ENCODE measurements at regions of chr1 and their contacts with region 1.

Region 1: GRCh38 chr1:228212966-228213844 is 5.4 kb downstream of the OBSCN start:
- DNase-seq: peak; percentile 76
- ATAC-seq: peak; percentile 97
- H3K4me3 Mint-ChIP-seq: peak overlapping the region; percentile 89
- H3K27ac Mint-ChIP-seq: peak overlapping the region; percentile 30
- H3K4me1 Mint-ChIP-seq: peaks cover 2% of the 10 kb centered on the region
- H3K27me3 Mint-ChIP-seq: no peaks in the 10 kb centered on the region
- CTCF ChIP-seq: no peak

Region 2: DNA sequence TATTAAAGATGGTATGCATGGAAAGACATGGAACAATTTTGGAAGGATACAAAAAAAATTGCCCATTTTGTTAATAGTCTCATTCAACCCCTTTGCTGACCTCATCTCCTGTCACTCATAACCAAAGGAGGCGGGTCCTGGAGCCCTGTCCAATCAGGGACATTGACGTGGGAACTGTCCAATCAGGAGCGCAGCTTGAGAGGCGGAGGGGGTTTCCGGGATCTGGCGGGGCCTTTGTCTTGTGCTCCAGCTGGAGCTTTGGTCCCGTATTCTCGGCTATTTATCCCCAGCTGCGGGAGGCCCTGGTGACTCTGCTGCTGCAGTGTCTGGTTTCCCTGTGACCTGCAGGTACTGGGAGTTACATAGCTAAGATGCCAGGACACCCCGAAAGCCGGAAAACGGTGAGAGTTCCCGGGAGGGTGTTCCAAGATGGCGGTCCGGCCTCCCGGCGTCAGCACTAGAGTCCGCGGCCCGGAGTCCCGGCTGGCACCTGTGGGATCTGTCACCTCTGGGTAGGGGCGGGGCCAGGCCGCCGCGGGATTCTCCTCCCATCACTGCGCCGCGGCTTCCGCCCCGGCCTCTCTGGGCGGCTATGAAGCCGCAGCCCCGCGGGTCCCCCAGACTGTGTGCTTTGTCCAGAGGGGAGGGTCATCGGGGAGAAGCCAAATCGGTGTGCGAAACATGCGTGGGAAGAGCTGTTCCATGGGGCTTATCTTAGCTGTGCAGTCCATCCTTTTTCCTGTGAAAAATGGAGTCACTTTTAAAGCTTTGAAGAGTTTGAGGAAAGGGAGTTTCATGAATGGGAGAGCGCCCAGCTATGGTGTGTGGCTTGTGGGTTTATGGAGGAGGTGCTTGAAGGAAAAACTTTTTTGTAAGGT is 649.6 kb before region 1 on chr1 and contains the start of gene ZNF678:
- CTCF ChIA-PET with region 1: no interaction called
- POLR2A ChIA-PET with region 1: no interaction called
- intact Hi-C with region 1: loop called (anchors 10 kb)
- DNase-seq: peak; percentile 77
- ATAC-seq: peak; percentile 89
- H3K4me3 Mint-ChIP-seq: peak within 1 kb of the TSS; percentile 95
- H3K27ac Mint-ChIP-seq: peak within 1 kb of the TSS; percentile 94
- H3K4me1 Mint-ChIP-seq: peaks cover 48% of the 10 kb centered on the region
- H3K27me3 Mint-ChIP-seq: peaks cover 8% of the 10 kb centered on the region
- CTCF ChIP-seq: no peak
- total RNA-seq, gene ZNF678: 15.4 and 20.3 TPM in 2 replicates

Region 3: DNA sequence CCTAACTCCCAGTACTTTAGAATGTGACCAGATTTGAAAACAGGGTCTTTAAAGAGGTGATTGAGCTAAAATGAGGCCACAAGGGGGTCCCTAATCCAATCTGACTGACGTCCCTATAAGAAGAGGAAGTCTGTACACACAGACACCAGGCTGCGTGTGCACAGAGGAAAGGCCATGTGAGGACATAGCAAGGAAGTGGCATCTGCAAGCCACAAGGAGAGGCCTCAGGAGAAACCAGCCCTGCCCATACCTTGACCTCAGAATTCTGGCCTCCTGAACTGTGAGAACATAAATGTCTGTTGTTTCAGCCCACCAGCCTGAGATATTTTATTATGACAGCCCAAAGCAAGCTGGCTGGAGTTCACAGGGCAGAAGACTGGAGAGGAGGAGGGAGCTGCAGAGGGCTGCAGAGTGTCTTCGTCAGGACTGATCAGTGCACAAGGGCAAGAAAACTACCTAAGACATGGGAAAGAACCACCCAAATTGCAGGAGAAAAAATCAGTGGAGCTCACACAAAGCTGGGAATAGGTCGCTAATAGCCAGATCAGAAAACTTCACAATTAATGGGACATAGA is 251.5 kb before region 1 on chr1:
- CTCF ChIA-PET with region 1: no interaction called
- POLR2A ChIA-PET with region 1: no interaction called
- intact Hi-C with region 1: no loop called
- DNase-seq: no peak
- ATAC-seq: no peak
- H3K4me3 Mint-ChIP-seq: no peak overlapping the region
- H3K27ac Mint-ChIP-seq: no peak overlapping the region
- H3K4me1 Mint-ChIP-seq: no peaks in the 10 kb centered on the region
- H3K27me3 Mint-ChIP-seq: peaks cover 25% of the 10 kb centered on the region
- CTCF ChIP-seq: no peak

Region 4: DNA sequence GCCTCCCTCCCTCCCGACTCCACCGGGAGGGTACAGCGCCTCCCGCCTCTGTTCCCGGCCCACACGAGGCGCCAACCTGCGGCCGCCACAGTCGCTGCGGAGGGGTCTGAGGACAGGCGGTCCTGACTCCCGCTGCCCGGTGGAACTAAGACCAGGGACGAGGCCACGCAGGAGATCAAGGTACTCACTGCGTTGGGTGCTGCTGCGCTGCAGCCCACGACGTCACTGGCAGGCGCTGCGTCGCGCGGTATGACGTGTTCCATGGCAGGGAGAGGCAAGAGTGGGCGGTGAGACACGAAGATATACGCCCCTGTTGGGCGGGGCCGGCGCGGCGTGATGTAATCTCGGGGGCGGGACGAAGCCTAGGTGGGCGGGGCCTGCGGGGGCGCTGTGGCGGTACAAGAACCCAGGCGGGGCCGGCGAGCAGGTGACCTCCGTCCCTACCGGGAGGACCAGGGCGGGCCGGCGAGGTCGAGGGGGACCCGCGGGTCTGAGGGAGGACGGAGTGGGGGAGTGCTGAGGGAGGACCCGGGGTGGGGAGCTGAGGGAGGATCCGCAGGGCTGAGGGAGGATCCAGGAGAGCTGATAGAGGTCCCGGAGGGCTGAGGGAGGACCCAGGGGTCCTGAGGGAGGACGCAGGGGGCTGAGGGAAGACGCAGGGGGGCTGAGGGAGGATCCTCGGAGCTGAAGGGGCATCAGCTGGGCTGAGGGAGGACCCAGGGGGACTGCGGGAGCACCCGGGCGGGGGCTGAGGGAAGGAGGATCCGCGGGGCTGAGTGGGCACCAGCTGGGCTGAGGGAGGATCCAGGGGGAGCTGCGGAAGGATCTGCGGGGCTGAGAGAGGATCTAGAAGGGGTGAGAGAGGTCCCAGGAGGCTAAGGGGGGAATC is 103.9 kb before region 1 on chr1 and contains the start of gene MRPL55:
- CTCF ChIA-PET with region 1: no interaction called
- POLR2A ChIA-PET with region 1: no interaction called
- intact Hi-C with region 1: loop called (anchors 1 kb)
- DNase-seq: peak; percentile 100
- ATAC-seq: peak; percentile 96
- H3K4me3 Mint-ChIP-seq: peak within 1 kb of the TSS; percentile 92
- H3K27ac Mint-ChIP-seq: peak within 1 kb of the TSS; percentile 93
- H3K4me1 Mint-ChIP-seq: peaks cover 24% of the 10 kb centered on the region
- H3K27me3 Mint-ChIP-seq: no peaks in the 10 kb centered on the region
- CTCF ChIP-seq: no peak
- total RNA-seq, gene MRPL55: 34.0 and 34.3 TPM in 2 replicates

Region 5: DNA sequence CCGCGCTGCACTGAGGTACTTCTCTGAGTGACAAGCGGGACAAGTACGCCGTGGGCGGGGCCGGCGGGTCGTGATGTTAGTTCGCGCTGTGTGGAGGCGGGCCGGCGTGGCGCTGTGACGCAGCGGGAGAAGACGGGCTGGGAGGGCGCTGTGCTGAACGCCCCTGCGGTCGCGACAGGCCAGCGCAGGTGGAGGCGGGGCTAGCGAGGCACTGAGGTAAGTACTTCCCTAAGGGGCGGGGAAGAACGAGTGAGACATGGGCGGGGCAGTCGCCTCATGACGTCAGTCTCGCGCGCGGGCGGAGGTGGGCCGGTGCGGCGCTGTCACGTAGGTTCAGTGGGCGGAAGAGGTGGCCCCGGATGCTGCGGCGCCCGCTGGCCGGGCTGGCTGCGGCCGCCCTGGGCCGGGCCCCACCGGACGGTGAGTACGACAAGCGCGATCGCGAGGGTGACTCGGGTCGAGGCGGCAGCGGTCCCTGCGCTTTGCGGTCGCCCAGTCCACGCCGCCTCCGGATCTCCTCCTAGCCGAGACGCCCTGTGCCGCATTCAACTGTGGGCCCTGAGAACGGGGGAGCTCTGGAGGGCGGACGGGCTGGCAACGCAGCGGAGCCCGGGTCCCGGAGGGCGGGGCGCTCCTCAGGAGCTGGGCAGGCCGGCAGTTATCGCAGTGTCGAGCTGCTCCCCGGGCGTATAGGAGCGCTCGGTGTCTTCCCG is 73.1 kb before region 1 on chr1 and contains the start of gene GUK1:
- CTCF ChIA-PET with region 1: interaction called, 3 read pairs
- POLR2A ChIA-PET with region 1: interaction called, 4 read pairs
- intact Hi-C with region 1: loop called (anchors 1 kb)
- DNase-seq: peak; percentile 99
- ATAC-seq: peak; percentile 92
- H3K4me3 Mint-ChIP-seq: peak within 1 kb of the TSS; percentile 96
- H3K27ac Mint-ChIP-seq: peak within 1 kb of the TSS; percentile 99
- H3K4me1 Mint-ChIP-seq: peaks cover 71% of the 10 kb centered on the region
- H3K27me3 Mint-ChIP-seq: no peaks in the 10 kb centered on the region
- CTCF ChIP-seq: no peak
- total RNA-seq, gene GUK1: 104 and 119 TPM in 2 replicates

Region 6: DNA sequence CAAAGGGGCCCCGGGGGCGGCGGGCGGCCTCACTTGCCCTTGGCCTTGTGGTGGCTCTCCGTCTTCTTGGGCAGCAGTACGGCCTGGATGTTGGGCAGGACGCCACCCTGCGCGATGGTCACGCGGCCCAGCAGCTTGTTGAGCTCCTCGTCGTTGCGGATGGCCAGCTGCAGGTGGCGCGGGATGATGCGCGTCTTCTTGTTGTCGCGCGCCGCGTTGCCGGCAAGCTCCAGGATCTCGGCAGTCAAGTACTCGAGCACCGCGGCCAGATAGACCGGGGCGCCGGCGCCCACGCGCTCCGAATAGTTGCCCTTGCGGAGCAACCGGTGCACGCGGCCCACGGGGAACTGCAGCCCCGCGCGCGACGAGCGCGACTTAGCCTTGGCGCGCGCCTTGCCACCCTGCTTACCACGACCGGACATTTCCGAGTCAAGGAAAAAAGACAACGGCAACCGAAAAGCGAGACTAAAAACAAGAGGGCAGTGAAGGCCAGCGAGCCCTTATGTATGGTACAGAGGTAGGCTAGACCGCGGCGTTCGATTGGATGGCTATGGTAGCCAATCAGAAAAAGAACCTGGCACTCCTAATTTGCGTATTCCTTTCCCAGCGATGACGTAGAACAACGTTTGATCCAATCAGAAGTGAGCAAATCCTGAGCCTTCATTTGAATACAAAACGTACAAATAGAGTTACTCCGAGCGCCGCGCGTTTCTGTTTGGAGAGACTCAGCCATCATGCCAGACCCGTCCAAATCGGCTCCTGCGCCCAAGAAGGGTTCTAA is 244.4 kb after region 1 on chr1:
- CTCF ChIA-PET with region 1: no interaction called
- POLR2A ChIA-PET with region 1: interaction called, 6 read pairs
- intact Hi-C with region 1: loop called (anchors 2 kb)
- DNase-seq: peak; percentile 53
- ATAC-seq: peak; percentile 85
- H3K4me3 Mint-ChIP-seq: peak overlapping the region; percentile 89
- H3K27ac Mint-ChIP-seq: peak overlapping the region; percentile 89
- H3K4me1 Mint-ChIP-seq: peaks cover 25% of the 10 kb centered on the region
- H3K27me3 Mint-ChIP-seq: peaks cover 26% of the 10 kb centered on the region
- CTCF ChIP-seq: no peak

Region 7: GRCh38 chr1:228500901-228501871 is 288.0 kb after region 1 on chr1:
- CTCF ChIA-PET with region 1: no interaction called
- POLR2A ChIA-PET with region 1: no interaction called
- intact Hi-C with region 1: loop called (anchors 1 kb)
- DNase-seq: peak; percentile 72
- ATAC-seq: peak; percentile 96
- H3K4me3 Mint-ChIP-seq: peak overlapping the region; percentile 77
- H3K27ac Mint-ChIP-seq: peak overlapping the region; percentile 84
- H3K4me1 Mint-ChIP-seq: peaks cover 17% of the 10 kb centered on the region
- H3K27me3 Mint-ChIP-seq: peaks cover 9% of the 10 kb centered on the region
- CTCF ChIP-seq: peak; percentile 91

Measured in activated B cell treated with CpG ODN at 0.5 μM for 24 hours (primary cell).